ENCODE measurements at regions of chr2 and their contacts with region 1.

Region 1: GRCh38 chr2:25342372-25343186 is 854 bp upstream of the DNMT3A start:
- DNase-seq: peak; percentile 79
- H3K4me3 Mint-ChIP-seq: peak overlapping the region; percentile 88
- H3K27ac Mint-ChIP-seq: peak overlapping the region; percentile 88
- H3K4me1 Mint-ChIP-seq: peaks cover 37% of the 10 kb centered on the region
- H3K27me3 Mint-ChIP-seq: peaks cover 5% of the 10 kb centered on the region

Region 2: DNA sequence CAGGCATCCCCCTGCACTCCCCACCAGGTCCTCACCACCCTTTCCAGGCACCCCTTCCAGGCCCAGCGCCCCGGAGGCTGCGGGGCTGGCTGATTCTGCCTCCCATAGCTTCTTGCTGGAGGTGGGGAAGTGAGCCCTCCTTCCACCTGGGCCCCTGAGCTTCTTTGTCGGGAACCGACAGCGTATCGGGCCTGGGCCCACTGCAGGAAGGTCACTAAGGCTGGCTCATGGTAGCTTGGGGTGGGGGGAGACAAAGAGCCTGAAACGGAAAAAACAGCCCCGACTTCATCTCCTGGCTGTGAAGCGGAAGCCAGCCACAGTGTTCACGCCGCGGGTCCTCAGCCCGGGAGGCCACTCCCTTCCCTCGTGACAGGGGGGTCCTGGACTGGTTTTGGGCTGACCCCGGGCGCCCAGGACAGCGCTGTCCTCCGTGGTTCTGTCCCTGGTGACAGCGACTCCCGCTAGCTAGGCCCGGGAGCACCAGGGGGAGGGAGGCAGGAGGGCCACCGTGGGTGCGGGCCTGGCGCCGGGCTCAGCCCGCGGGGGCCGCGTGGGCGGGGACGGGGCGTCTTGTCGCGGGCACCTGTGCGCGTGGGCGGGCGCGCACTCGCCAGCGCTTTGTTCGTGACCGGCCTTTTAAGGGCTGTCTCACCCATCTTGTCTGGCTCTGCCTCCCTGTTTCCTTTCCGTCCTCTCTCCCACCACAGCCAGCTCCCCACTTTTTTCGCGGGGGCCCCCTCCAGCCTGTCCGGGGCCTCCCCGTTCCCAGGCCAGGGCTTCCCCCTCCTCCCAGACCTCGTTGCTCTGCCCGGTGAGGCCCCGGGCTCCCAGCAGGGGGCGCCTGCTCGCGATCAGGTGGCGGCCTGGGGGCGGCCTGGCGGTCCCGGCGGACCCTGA is 65.8 kb before region 1 on chr2:
- intact Hi-C with region 1: loop called (anchors 2 kb)
- DNase-seq: peak; percentile 73
- H3K4me3 Mint-ChIP-seq: peak overlapping the region; percentile 53
- H3K27ac Mint-ChIP-seq: peak overlapping the region; percentile 81
- H3K4me1 Mint-ChIP-seq: peaks cover 67% of the 10 kb centered on the region
- H3K27me3 Mint-ChIP-seq: no peaks in the 10 kb centered on the region

Region 3: GRCh38 chr2:25301453-25302352 is 40.9 kb before region 1 on chr2:
- intact Hi-C with region 1: loop called (anchors 1 kb)
- DNase-seq: peak; percentile 76
- H3K4me3 Mint-ChIP-seq: peak overlapping the region; percentile 53
- H3K27ac Mint-ChIP-seq: peak overlapping the region; percentile 40
- H3K4me1 Mint-ChIP-seq: peaks cover 40% of the 10 kb centered on the region
- H3K27me3 Mint-ChIP-seq: no peaks in the 10 kb centered on the region

Region 4: DNA sequence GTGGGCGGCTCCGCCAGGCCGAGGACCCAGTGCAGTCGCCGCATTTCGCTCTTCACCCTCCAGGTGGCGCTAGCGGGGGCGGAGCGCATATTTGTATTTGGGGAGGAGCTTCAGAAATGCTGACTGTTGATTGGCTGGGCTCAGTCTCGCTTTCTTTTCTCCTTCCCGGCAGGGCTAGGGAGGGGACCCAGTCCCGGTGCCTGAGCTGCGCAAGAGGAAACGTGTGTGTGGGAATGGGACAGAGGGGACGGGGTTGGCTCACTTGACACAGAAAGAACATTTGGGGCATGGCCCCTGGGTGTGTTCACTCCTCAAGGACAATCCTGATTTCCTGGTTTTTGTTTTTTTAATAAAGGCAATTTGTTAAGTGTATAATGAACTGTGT is 19.5 kb after region 1 on chr2:
- intact Hi-C with region 1: loop called (anchors 1 kb)
- DNase-seq: peak; percentile 93
- H3K4me3 Mint-ChIP-seq: peak overlapping the region; percentile 84
- H3K27ac Mint-ChIP-seq: peak overlapping the region; percentile 94
- H3K4me1 Mint-ChIP-seq: peaks cover 26% of the 10 kb centered on the region
- H3K27me3 Mint-ChIP-seq: peaks cover 2% of the 10 kb centered on the region

Region 5: GRCh38 chr2:25558262-25558661 is 215.7 kb after region 1 on chr2:
- intact Hi-C with region 1: loop called (anchors 1 kb)
- DNase-seq: peak; percentile 53
- H3K4me3 Mint-ChIP-seq: peak overlapping the region; percentile 46
- H3K27ac Mint-ChIP-seq: peak overlapping the region; percentile 98
- H3K4me1 Mint-ChIP-seq: peaks cover 63% of the 10 kb centered on the region
- H3K27me3 Mint-ChIP-seq: no peaks in the 10 kb centered on the region

Region 6: GRCh38 chr2:25567406-25567805 is 224.8 kb after region 1 on chr2:
- intact Hi-C with region 1: loop called (anchors 1 kb)
- DNase-seq: no peak
- H3K4me3 Mint-ChIP-seq: no peak overlapping the region
- H3K27ac Mint-ChIP-seq: no peak overlapping the region
- H3K4me1 Mint-ChIP-seq: peaks cover 16% of the 10 kb centered on the region
- H3K27me3 Mint-ChIP-seq: no peaks in the 10 kb centered on the region

Measured in activated T-helper 1 cell treated with anti-CD3 and anti-CD28 coated beads, Interleukin-12 subunit alpha, Interleukin-12 subunit beta, Interleukin-2, Interleukin-4 antibody, amounts not matched to agents 30 ng/mL and 10 ng/mL and 1 ng/mL, durations not matched to agents 14 hours and 24 hours and 36 hours (primary cell).